Calu3 (cell line): ENCODE measurements at regions of chr20 and their contacts with region 1.

Region 1: DNA sequence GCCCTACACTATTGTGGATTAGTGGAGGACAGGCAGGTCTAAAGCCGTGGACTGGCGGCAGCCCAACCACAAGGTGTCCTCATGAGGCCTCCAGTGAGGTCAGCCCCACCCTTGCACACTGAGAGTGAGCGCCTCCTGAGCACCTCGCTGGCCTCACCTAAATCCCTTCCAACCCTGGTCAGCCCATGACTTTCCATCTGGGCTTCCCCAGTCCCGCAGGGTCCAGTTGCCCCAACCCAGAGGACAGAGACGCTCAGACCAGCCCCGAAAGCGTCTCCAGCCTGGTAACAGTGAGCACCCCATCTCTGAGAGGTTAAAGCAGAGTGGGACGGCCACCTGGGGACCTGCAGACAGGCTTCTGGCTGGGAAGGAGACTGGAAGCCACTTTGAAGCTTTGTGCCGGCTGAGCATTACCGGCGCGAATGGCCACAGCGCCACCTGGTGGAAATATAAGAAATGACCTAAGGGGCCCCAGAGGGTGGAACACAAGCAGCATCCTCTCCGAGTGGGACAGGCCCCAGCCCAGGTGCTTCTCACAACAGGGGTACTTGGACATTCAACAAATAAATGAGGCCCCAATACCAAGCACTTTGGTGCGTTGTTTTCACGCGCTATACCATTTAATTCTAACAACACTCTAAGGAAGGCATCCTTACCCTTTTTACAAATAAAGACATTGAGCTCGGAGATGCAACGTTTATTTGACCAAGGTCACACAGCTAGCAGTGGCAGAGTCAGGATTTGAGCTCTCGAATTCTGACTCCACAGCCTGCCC is 65.7 kb upstream of the TOP1 start:
- DNase-seq: peak; percentile 90
- H3K4me3 Mint-ChIP-seq: no peak overlapping the region
- H3K27ac Mint-ChIP-seq: no peak overlapping the region
- H3K4me1 Mint-ChIP-seq: no peaks in the 10 kb centered on the region
- H3K27me3 Mint-ChIP-seq: peaks cover 48% of the 10 kb centered on the region
- CTCF ChIP-seq: peak; percentile 97

Region 2: DNA sequence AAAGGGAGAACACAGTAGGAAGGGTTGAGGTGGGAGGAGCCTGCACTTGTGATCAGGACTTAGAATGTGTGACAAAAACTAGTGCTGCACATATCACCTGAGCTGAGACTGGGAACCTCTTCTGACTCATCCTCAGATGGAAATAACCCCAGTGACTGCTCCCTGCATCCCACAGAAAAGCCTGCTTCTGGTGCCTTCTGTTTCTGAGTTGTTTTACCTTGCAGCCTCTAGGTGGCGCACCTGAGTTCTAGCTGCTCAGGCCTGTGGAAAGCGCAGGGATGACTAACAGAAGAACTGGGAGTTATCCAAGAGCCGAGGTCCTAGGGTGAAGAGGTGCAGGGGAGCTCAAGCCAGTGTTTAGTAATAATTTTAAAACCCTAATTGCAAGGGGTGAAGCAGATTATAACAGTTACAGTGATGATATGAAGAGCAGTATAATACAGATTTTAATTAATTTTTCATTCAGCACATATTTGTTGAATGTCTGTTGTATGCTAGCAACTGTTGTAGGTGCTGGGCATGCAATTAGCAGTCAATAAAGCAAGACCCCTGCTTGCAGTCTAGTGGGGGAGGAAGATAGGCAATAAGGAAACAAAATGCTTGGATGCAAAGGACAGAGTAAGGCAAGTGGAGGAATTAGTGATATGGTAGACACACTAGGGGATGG is 1698.3 kb before region 1 on chr20:
- CTCF ChIA-PET with region 1: interaction called, 11 read pairs
- intact Hi-C with region 1: loop called (anchors 5 kb)
- DNase-seq: peak; percentile 81
- H3K4me3 Mint-ChIP-seq: no peak overlapping the region
- H3K27ac Mint-ChIP-seq: no peak overlapping the region
- H3K4me1 Mint-ChIP-seq: no peaks in the 10 kb centered on the region
- H3K27me3 Mint-ChIP-seq: peaks cover 75% of the 10 kb centered on the region
- CTCF ChIP-seq: peak; percentile 98

Region 3: GRCh38 chr20:40265825-40266533 is 696.9 kb before region 1 on chr20:
- CTCF ChIA-PET with region 1: no interaction called
- intact Hi-C with region 1: loop called (anchors 5 kb)
- DNase-seq: peak; percentile 49
- H3K4me3 Mint-ChIP-seq: no peak overlapping the region
- H3K27ac Mint-ChIP-seq: no peak overlapping the region
- H3K4me1 Mint-ChIP-seq: no peaks in the 10 kb centered on the region
- H3K27me3 Mint-ChIP-seq: peaks cover 56% of the 10 kb centered on the region
- CTCF ChIP-seq: peak; percentile 47

Region 4: DNA sequence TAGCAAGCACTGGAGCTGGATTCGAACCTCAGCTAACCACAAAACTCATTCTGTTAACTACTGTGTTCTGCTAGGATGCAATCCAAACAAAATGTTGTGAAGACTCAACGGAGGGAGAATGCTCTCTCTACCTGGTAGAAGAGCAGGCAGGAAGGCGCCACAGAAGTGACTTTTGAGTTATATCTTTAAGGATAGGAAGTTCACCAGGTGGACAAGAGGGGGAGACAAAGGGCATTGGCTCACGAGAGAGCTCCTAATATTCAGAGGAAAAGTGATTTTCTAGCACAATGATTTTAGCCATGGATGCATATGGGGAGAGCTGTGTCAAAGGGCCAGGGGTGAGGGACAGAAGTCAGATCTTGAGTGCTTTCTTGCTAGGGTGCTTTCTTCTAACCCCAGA is 165.5 kb before region 1 on chr20:
- CTCF ChIA-PET with region 1: interaction called, 14 read pairs
- intact Hi-C with region 1: loop called (anchors 2 kb)
- DNase-seq: peak; percentile 33
- H3K4me3 Mint-ChIP-seq: no peak overlapping the region
- H3K27ac Mint-ChIP-seq: no peak overlapping the region
- H3K4me1 Mint-ChIP-seq: no peaks in the 10 kb centered on the region
- H3K27me3 Mint-ChIP-seq: peaks cover 71% of the 10 kb centered on the region
- CTCF ChIP-seq: peak; percentile 68

Region 5: GRCh38 chr20:41095110-41095969 is 132.4 kb after region 1 on chr20:
- CTCF ChIA-PET with region 1: interaction called, 5 read pairs
- intact Hi-C with region 1: loop called (anchors 1 kb)
- DNase-seq: peak; percentile 57
- H3K4me3 Mint-ChIP-seq: no peak overlapping the region
- H3K27ac Mint-ChIP-seq: no peak overlapping the region
- H3K4me1 Mint-ChIP-seq: no peaks in the 10 kb centered on the region
- H3K27me3 Mint-ChIP-seq: no peaks in the 10 kb centered on the region
- CTCF ChIP-seq: peak; percentile 89

Region 6: GRCh38 chr20:41232973-41233926 is 270.3 kb after region 1 on chr20:
- CTCF ChIA-PET with region 1: no interaction called
- intact Hi-C with region 1: loop called (anchors 1 kb)
- DNase-seq: no peak
- H3K4me3 Mint-ChIP-seq: peak overlapping the region; percentile 35
- H3K27ac Mint-ChIP-seq: peak overlapping the region; percentile 42
- H3K4me1 Mint-ChIP-seq: peaks cover 19% of the 10 kb centered on the region
- H3K27me3 Mint-ChIP-seq: no peaks in the 10 kb centered on the region
- CTCF ChIP-seq: no peak